ENCODE measurements at regions of chr1 and their contacts with region 1.

Region 1: GRCh38 chr1:159132271-159132881 is 39.0 kb upstream of the CADM3 start:
- DNase-seq: peak; percentile 47 to 80
- H3K4me3 ChIP-seq: no peak overlapping the region
- H3K4me1 ChIP-seq: no peaks in the 10 kb centered on the region
- H3K27me3 ChIP-seq: 0 out of 2 replicates have a peak, but pooled peaks cover 3% of the 10 kb centered on the region

Region 2: GRCh38 chr1:158716335-158716734 is 416.0 kb before region 1 on chr1:
- in situ Hi-C with region 1: no loop called
- DNase-seq: no peak
- H3K4me3 ChIP-seq: no peak overlapping the region
- H3K4me1 ChIP-seq: no peaks in the 10 kb centered on the region
- H3K27me3 ChIP-seq: no peaks in the 10 kb centered on the region

Region 3: DNA sequence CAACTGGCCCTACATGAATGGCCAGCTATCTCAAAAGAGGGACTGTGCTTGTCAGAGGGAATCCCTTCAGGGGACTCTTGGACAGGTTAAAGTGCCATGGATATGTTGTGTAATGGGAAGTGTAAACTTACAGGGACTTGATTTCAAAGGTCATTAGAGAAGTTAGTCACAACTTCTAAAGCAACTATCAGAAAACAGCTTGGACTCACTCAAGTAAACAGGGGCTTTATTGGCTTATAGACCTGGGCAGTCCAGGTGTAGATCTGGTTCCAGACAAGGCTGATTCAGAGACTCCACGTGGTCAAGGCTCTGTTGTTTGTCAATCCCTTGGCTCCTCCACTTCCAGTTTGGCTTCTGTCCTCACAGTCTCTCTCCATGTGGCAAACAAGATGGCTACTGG is 579.7 kb after region 1 on chr1:
- in situ Hi-C with region 1: no loop called
- DNase-seq: no peak
- H3K4me3 ChIP-seq: no peak overlapping the region
- H3K4me1 ChIP-seq: no peaks in the 10 kb centered on the region
- H3K27me3 ChIP-seq: no peaks in the 10 kb centered on the region

Region 4: DNA sequence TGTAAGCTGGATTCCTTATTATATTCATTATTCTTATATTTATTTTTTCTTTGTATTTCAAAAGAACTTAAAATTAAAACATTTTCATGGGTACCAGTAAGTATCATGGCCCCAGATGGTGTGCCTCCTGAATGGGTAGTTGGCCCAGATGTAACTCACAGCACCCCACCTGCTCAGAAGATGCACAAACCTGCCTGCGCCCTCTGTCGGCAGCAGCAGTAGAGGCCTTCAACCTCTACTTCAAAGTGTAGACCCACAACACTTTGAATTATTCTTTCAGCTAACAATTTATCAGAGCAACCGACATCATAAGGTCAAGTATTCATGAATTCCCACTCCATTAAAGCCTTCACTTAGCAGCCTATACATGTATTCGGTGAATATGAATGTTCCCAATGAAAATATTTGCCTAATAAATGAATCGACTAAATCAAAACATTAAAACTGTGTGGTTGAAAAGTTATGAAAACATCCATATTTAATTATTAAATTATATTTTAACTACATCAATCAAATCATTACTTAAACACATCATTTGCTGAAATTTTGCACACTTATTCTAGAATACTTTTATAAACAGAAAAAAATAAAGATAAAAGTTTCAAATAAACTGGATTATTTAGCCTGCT is 874.0 kb after region 1 on chr1:
- in situ Hi-C with region 1: loop called (anchors 25 kb)
- DNase-seq: peak; percentile 54 to 83
- H3K4me3 ChIP-seq: no peak overlapping the region
- H3K4me1 ChIP-seq: peaks cover 15% of the 10 kb centered on the region
- H3K27me3 ChIP-seq: no peaks in the 10 kb centered on the region